Mammary epithelial cell (primary cell): ENCODE measurements at regions of chr19 and their contacts with region 1.

Region 1: DNA sequence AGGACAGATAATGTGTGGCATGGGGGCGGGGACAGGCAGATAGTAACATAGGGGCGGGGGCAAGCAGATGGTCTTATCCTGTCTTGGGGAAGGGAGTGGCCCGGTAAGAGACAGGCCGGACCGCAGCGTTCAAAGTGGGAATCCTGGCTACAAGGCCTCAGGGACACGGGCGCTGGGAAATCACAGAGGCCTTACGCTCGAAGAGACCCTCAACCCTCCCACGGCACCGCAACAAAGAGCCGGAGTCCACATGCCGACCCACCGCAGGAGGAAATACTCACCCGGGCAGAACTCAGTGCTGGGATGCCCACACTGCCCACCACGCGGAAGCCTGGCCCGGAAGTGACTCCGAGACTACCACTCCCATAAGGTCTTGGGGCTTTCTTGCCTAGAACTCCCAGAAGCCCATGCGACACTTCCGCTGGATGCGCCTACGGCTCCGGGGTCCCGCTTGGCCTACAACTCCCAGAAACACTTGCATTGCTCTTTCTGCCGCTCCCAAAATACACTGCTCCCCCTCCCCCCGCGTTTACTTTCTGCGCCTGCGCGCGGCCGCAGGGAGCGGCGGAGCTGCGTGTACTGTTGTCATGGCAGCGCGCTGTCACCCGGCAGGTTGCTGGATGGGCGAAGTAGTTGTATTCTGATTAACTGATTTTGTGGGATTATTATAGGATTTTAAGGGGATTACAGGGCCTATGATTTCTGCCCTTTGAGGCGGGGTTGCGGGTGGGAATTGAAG is at the start of gene CTU1:
- DNase-seq: peak; percentile 99
- H3K4me3 ChIP-seq: peak within 1 kb of the TSS; percentile 65 to 88 (median 80)
- H3K27ac ChIP-seq: peak within 1 kb of the TSS; percentile 75
- H3K4me1 ChIP-seq: peaks cover 11% of the 10 kb centered on the region
- H3K27me3 ChIP-seq: peaks cover 4% of the 10 kb centered on the region
- CTCF ChIP-seq: no peak
- total RNA-seq, gene CTU1: 5.5 to 10.2 TPM

Region 2: DNA sequence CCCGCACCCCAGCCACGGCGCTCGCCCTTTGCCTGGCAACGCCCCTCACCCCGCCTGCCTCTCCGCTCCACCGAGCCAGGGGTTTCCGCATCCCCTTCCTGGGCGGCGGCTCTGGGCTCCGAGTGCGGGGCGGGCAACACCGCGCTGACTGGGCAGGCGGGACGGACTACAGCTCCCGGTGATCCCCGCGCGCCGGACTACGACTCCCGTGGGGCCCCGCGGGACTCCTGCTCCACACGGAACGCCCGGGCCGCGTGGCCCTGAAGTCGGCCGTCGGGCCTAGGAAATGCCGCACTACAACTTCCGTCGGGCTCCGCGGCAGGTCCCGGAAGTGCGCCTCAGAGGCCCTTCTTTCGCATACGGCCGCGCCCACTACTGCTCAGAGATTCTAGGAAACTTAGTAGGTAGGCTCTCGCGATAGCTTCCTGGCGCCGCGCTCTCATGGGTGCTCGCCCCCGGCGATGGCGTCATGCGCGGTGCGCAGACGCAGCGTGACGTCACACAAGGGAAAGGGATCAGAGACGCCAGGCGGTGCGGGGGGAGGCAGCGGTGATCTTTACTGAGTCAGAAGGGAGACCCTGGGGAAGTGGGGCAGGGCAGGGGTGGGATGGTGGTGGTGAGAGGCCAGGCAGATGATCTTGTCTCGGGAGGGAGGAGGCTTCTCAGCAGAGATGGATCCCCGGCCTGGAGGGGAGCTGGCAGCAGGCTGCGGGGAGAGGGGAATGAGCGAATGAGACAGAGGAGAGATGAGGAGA is 597.0 kb before region 1 on chr19 and contains the start of gene JOSD2:
- CTCF ChIA-PET with region 1: no interaction called
- dilution Hi-C with region 1: no loop called
- in situ Hi-C with region 1: no loop called
- intact Hi-C with region 1: loop called (anchors 10 kb)
- DNase-seq: peak; percentile 99
- H3K4me3 ChIP-seq: peak within 1 kb of the TSS; percentile 82 to 96 (median 94)
- H3K27ac ChIP-seq: peak within 1 kb of the TSS; percentile 79
- H3K4me1 ChIP-seq: peaks cover 12% of the 10 kb centered on the region
- H3K27me3 ChIP-seq: no peaks in the 10 kb centered on the region
- CTCF ChIP-seq: no peak
- total RNA-seq, gene JOSD2: 17.3 to 71.1 TPM

Region 3: GRCh38 chr19:51002542-51003171 is 105.6 kb before region 1 on chr19:
- CTCF ChIA-PET with region 1: no interaction called
- dilution Hi-C with region 1: loop called (anchors 5 kb)
- in situ Hi-C with region 1: no loop called
- intact Hi-C with region 1: no loop called
- DNase-seq: peak; percentile 88
- H3K4me3 ChIP-seq: peak overlapping the region; percentile 36 to 69 (median 67)
- H3K27ac ChIP-seq: peak overlapping the region; percentile 84
- H3K4me1 ChIP-seq: peaks cover 47% of the 10 kb centered on the region
- H3K27me3 ChIP-seq: no peaks in the 10 kb centered on the region
- CTCF ChIP-seq: no peak

Region 4: DNA sequence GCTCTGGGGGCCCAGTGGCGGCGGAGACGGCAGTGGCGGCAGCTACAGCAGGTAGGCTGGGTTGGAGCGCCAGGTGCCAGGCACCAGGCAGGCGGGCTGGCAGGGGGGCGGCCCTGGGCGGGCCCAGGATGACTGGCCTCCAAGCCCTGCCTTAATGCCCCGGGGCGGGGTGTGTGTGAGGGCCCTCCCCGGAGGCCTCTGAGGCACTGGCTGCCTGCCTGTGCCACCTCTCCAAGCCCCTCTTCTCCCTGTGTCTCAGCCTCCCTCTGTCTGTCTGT is 81.7 kb before region 1 on chr19 and contains the start of gene KLK11:
- CTCF ChIA-PET with region 1: no interaction called
- dilution Hi-C with region 1: loop called (anchors 5 kb)
- in situ Hi-C with region 1: no loop called
- intact Hi-C with region 1: no loop called
- DNase-seq: peak; percentile 45
- H3K4me3 ChIP-seq: no peak within 1 kb of the TSS
- H3K27ac ChIP-seq: no peak within 1 kb of the TSS
- H3K4me1 ChIP-seq: peaks cover 13% of the 10 kb centered on the region
- H3K27me3 ChIP-seq: no peaks in the 10 kb centered on the region
- CTCF ChIP-seq: no peak
- total RNA-seq, gene KLK11: 2.3 to 2.5 TPM

Region 5: GRCh38 chr19:51698241-51698651 is 590.0 kb after region 1 on chr19:
- CTCF ChIA-PET with region 1: no interaction called
- dilution Hi-C with region 1: loop called (anchors 5 kb)
- in situ Hi-C with region 1: no loop called
- intact Hi-C with region 1: no loop called
- DNase-seq: no peak
- H3K4me3 ChIP-seq: no peak overlapping the region
- H3K27ac ChIP-seq: no peak overlapping the region
- H3K4me1 ChIP-seq: peaks cover 19% of the 10 kb centered on the region
- H3K27me3 ChIP-seq: no peaks in the 10 kb centered on the region
- CTCF ChIP-seq: no peak